ENCODE measurements at regions of chr1 and their contacts with region 1.

Region 1: DNA sequence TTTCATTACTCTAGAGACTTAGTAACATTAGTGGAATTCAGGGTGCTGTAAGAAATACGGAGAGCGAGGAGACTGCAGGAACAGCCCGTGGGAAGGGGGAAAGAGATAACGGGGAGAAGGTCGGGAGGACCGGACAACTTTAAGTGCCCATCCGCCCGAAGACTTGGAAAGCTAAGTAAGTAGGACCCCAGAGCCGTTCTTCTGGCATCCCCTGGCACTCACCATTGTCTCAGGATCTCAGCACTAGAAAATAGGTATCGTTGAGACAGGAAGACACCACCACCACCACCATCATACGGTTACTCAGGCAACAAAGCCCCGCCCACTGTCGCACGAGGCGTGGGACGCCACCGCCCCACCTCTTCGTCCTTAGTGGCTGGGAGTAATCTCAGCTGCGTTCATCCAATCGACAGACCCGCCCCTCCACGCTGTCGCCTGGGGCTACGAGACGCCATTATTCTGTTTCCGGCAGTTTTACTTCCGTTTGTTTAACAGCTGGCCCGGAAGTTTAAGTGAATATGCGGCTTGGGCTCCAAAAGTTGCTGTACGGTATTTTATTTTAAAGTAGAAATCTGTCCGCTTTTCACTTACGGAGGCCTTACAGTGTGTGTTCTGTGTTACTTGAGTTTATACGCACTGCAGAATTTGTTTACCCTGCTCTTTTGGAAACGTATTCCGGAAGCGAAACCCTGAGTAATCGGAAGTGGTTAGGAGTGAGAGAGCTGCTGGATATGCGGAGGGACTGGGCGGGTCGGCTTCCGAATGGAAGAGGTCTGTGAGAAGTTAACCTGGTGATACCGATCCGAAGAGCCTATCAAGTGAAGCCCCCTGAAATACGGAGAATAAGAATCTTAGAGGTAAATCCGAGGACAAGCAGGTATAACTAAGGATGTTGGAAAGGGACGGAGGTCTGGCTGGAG is at the starts of genes BLZF1 and NME7:
- DNase-seq: peak; percentile 98
- H3K4me3 Mint-ChIP-seq: peak within 1 kb of the TSS; percentile 67
- H3K27ac Mint-ChIP-seq: peak within 1 kb of the TSS; percentile 21
- H3K4me1 Mint-ChIP-seq: peaks cover 35% of the 10 kb centered on the region
- H3K27me3 Mint-ChIP-seq: no peaks in the 10 kb centered on the region
- total RNA-seq, gene BLZF1: 11.8 and 11.9 TPM in 2 replicates
- total RNA-seq, gene NME7: 14.1 and 23.4 TPM in 2 replicates

Region 2: DNA sequence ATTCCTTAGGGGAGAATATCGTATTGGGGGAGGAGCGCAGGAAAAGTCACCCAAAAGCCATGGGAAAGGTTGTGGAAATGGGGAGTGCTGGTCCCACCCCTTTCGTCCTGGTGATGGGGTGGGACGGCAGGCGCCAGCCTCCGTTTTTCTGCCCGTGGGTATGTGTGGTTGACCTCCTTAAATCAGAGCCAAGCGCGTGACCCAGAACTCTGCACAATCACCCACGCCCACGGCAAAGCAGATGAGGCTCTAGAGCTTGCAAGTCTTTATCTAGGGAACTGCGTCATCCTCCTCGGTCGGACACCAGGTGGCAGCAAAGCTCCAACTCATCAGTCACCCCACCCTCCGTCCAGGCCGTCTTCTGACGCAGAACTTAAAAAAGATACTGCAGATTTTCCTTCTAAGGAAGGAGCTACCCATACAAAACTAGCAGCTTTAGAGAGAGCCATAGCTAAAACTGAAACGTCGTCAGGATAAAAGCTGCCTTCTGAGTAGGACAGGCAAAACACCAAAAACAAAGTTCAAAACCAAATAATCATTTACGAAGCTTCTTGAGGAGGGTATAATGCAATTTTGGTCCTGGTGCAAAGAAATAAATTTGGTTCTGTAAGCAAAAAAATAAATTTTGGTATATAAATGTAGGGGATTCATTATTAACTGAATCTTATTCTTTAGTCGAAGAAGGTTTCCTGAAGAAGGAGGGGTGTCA is 1025.0 kb before region 1 on chr1:
- intact Hi-C with region 1: loop called (anchors 5 kb)
- DNase-seq: peak; percentile 82
- H3K4me3 Mint-ChIP-seq: no peak overlapping the region
- H3K27ac Mint-ChIP-seq: peak overlapping the region; percentile 80
- H3K4me1 Mint-ChIP-seq: peaks cover 82% of the 10 kb centered on the region
- H3K27me3 Mint-ChIP-seq: no peaks in the 10 kb centered on the region

Region 3: DNA sequence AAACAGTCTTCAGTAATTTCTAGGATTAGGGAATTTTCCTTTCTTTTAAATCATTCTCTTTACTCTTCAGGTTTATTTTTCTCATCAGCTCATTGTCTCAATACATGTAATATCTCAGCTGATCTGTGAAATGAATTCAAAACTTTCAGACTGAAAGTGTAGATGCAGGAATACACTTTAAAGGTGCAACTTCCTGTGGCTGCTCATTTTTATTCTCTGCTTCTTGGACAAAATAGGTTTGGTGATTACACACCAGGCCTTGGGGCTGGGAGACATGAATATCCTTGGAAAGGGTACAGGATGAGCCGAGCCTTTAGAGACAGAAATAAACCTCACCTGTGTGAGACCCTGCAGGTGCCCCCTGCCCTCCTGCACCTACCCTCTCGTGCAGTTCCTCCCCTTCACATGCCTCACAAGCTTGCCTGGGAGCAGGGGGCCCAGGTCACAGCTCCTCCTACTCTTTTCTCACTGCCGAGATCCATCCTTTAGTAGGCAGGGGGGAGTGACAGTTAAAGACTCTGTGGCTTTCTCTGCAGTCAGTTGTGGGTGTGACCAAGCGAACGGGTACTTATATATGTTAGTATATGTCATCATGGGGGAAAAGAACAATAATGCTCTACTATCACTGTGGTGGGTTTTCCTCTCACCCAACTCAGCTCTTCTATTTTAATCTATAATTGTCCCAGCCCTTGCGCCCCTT is 847.5 kb before region 1 on chr1:
- intact Hi-C with region 1: loop called (anchors 5 kb)
- DNase-seq: peak; percentile 40
- H3K4me3 Mint-ChIP-seq: peak overlapping the region; percentile 67
- H3K27ac Mint-ChIP-seq: peak overlapping the region; percentile 91
- H3K4me1 Mint-ChIP-seq: peaks cover 53% of the 10 kb centered on the region
- H3K27me3 Mint-ChIP-seq: no peaks in the 10 kb centered on the region

Region 4: GRCh38 chr1:169138866-169139670 is 228.7 kb before region 1 on chr1:
- intact Hi-C with region 1: loop called (anchors 1 kb)
- DNase-seq: no peak
- H3K4me3 Mint-ChIP-seq: no peak overlapping the region
- H3K27ac Mint-ChIP-seq: peak overlapping the region; percentile 56
- H3K4me1 Mint-ChIP-seq: peaks cover 12% of the 10 kb centered on the region
- H3K27me3 Mint-ChIP-seq: no peaks in the 10 kb centered on the region

Region 5: DNA sequence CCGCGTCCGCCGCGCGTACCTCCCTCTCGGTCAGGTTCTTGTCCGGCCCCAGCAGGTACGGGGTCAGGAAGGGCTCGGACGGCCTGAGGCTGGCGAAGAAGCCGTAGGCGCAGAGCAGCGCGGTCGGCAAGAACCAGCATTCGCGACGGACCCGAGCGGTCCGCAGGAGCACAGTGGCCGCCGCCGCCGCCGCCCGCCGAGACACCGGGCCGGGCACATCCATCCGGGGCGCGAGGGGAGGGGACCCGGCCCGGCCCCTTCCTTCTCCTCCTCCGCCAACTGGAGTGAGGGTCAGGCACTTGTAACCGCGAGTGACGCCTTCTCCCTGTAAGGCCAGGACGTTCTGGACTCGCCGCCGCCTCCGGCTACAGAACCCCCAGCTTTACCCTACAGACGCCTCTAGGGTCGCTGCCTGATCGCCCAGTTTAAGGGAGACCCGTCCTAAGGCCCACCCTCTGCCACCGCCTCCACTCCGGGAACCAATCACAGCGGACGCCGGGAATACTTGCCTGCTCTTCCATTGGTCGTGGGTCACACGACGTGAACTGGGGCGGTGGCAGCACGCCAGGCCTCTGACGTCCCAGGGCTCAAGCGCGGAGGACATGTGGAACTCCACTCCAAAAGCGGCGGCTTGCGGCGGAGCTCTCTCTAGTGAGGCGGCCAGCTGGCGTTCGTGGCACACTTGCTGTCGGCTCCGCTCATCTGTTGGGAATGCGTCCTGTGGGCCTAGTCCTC is 118.0 kb after region 1 on chr1 and contains the start of gene SLC19A2:
- intact Hi-C with region 1: loop called (anchors 2 kb)
- DNase-seq: peak; percentile 94
- H3K4me3 Mint-ChIP-seq: peak within 1 kb of the TSS; percentile 89
- H3K27ac Mint-ChIP-seq: peak within 1 kb of the TSS; percentile 90
- H3K4me1 Mint-ChIP-seq: peaks cover 59% of the 10 kb centered on the region
- H3K27me3 Mint-ChIP-seq: no peaks in the 10 kb centered on the region
- total RNA-seq, gene SLC19A2: 11.2 and 11.9 TPM in 2 replicates

Region 6: DNA sequence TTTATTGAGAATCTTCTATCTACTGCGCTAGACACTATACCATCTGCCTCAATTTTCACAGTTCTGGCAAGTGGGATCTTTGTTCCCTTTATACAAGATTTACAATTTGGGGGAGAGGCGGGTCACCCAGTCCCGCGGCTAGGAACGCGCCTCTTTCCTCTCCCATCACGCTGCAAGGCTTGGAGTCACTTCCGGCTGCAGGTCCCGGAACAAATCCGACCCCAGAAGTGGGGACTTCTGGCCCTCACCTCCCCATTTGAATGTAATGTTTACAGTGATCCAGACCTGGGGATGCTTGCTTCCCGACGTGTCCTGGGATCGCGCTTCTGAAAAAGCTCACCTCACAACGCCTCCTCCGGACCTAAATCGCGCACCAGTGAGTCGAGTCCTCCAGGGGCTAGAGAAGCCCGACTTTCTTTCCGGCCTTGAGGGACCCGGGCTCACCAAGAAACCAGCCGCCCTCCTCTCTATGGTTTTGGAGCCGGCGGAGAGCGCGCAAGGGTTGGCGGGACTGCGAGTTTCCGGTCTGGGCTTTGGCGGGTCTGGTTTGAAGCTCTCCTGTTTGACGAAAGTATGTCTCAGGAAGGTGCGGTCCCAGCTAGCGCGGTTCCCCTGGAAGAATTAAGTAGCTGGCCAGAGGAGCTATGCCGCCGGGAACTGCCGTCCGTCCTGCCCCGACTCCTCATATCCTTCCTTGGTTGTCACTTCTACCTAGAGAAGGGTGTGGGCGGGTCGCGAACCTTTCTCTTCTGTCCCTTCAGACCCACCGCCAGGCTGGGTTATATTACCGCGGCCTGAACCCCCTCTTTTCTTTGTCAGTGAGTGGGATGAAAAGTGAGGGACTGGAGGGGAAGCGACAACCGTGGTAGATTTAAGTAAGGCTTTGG is 427.0 kb after region 1 on chr1 and contains the start of gene METTL18:
- intact Hi-C with region 1: loop called (anchors 1 kb)
- DNase-seq: peak; percentile 92
- H3K4me3 Mint-ChIP-seq: peak within 1 kb of the TSS; percentile 92
- H3K27ac Mint-ChIP-seq: peak within 1 kb of the TSS; percentile 98
- H3K4me1 Mint-ChIP-seq: peaks cover 51% of the 10 kb centered on the region
- H3K27me3 Mint-ChIP-seq: no peaks in the 10 kb centered on the region
- total RNA-seq, gene METTL18: 8.9 and 10.9 TPM in 2 replicates